CD8-positive, alpha-beta T cell (primary cell): ENCODE measurements at regions of chr12 and their contacts with region 1.

Region 1: GRCh38 chr12:46124848-46125619 is 134.7 kb upstream of the SCAF11 start:
- DNase-seq: peak; percentile 9 to 86 (median 53)
- ATAC-seq: peak; percentile 96
- H3K4me3 ChIP-seq: no peak overlapping the region
- H3K4me3 Mint-ChIP-seq: peak overlapping the region; percentile 7
- H3K27ac ChIP-seq: no peak overlapping the region
- H3K27ac Mint-ChIP-seq: peak overlapping the region; percentile 70
- H3K4me1 ChIP-seq: no peaks in the 10 kb centered on the region
- H3K4me1 Mint-ChIP-seq: peaks cover 4% of the 10 kb centered on the region
- H3K27me3 ChIP-seq: no peaks in the 10 kb centered on the region
- H3K27me3 Mint-ChIP-seq: peaks cover 7% of the 10 kb centered on the region
- CTCF ChIP-seq: peak; percentile 69

Region 2: DNA sequence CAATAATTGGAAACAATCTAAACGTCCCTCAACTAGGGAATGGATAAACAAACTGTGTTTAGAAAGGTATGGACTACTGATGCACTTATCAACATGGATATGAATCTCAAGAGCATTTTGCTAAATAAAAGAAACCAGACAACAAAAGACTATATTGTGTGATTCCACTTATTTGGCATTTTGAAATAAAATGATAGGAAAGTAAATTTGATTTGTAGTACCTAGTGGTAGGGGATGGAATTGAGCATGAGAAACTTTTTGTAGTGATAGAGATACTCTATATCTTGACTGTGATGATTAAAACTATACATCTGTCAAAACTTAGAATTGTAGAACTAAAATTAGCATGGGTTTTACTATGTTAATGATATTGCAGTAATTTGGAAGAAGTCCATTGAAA is 308.4 kb before region 1 on chr12:
- CTCF ChIA-PET with region 1: no interaction called
- POLR2A ChIA-PET with region 1: no interaction called
- intact Hi-C with region 1: no loop called
- DNase-seq: no peak
- ATAC-seq: no peak
- H3K4me3 ChIP-seq: no peak overlapping the region
- H3K4me3 Mint-ChIP-seq: no peak overlapping the region
- H3K27ac ChIP-seq: no peak overlapping the region
- H3K27ac Mint-ChIP-seq: no peak overlapping the region
- H3K4me1 ChIP-seq: no peaks in the 10 kb centered on the region
- H3K4me1 Mint-ChIP-seq: peaks cover 2% of the 10 kb centered on the region
- H3K27me3 ChIP-seq: no peaks in the 10 kb centered on the region
- H3K27me3 Mint-ChIP-seq: no peaks in the 10 kb centered on the region
- CTCF ChIP-seq: no peak

Region 3: DNA sequence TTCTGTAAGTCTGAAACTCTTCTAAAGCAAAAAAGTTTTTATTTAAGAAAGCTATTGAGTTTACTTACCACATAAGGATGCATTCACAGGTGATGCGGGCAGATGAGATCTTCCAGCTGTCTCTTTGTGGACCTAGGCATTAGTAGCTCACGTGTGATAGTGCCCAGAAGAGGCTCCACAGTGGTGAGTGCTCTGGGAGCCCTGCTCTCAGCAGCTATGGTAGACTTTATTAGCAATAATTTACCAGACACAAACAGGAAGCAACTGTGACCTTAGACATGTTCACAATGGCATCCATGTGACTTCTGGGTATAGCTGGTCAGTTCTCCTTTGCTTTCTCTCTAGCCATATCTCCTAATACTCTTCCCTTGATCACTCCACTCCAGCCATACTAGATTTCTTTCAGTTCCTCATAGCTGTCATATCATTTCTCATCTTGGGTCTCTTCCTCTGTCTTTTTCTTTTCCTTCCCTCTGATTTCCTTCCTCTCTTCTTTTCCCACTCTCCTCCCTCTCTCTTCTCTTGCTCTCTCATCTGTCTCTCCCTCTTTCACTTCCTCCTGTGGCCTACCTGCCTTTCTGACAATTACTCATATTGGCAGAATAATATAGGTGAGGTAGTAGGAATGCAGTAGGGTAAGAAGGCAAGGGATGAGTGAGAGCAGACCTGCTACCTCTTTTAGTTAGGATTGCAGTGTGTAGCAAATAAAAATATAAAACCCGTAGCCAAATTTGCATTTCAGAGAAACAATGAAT is 59.4 kb before region 1 on chr12:
- CTCF ChIA-PET with region 1: no interaction called
- POLR2A ChIA-PET with region 1: no interaction called
- intact Hi-C with region 1: no loop called
- DNase-seq: no peak
- ATAC-seq: no peak
- H3K4me3 ChIP-seq: no peak overlapping the region
- H3K4me3 Mint-ChIP-seq: no peak overlapping the region
- H3K27ac ChIP-seq: no peak overlapping the region
- H3K27ac Mint-ChIP-seq: no peak overlapping the region
- H3K4me1 ChIP-seq: no peaks in the 10 kb centered on the region
- H3K4me1 Mint-ChIP-seq: no peaks in the 10 kb centered on the region
- H3K27me3 ChIP-seq: no peaks in the 10 kb centered on the region
- H3K27me3 Mint-ChIP-seq: peaks cover 4% of the 10 kb centered on the region
- CTCF ChIP-seq: no peak

Region 4: GRCh38 chr12:46110928-46111699 is 13.9 kb before region 1 on chr12:
- CTCF ChIA-PET with region 1: interaction called, 10 read pairs
- POLR2A ChIA-PET with region 1: no interaction called
- intact Hi-C with region 1: no loop called
- DNase-seq: no peak
- ATAC-seq: no peak
- H3K4me3 ChIP-seq: no peak overlapping the region
- H3K4me3 Mint-ChIP-seq: no peak overlapping the region
- H3K27ac ChIP-seq: no peak overlapping the region
- H3K27ac Mint-ChIP-seq: no peak overlapping the region
- H3K4me1 ChIP-seq: no peaks in the 10 kb centered on the region
- H3K4me1 Mint-ChIP-seq: no peaks in the 10 kb centered on the region
- H3K27me3 ChIP-seq: no peaks in the 10 kb centered on the region
- H3K27me3 Mint-ChIP-seq: peaks cover 21% of the 10 kb centered on the region
- CTCF ChIP-seq: no peak

Region 5: DNA sequence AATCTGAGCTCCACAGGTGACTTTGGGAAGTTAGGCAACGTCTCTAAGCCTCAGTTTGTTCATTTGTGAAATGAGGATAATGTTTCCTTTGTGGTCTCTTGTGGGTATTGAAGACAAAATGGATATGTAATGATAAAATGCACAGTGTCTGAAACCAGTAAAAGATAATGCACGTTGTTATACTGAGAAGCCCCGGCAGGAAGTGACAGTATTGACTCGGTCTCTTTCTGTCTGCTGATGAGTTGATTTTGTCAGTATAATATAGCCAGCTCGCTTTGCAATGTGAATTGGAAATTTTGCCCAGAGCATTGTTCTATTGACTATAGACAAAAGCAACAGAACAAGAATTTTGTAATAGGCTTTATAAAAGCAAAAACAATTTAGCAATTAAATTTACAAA is 193.0 kb after region 1 on chr12:
- CTCF ChIA-PET with region 1: interaction called, 10 read pairs
- POLR2A ChIA-PET with region 1: no interaction called
- intact Hi-C with region 1: no loop called
- DNase-seq: no peak
- ATAC-seq: no peak
- H3K4me3 ChIP-seq: no peak overlapping the region
- H3K4me3 Mint-ChIP-seq: no peak overlapping the region
- H3K27ac ChIP-seq: no peak overlapping the region
- H3K27ac Mint-ChIP-seq: no peak overlapping the region
- H3K4me1 ChIP-seq: no peaks in the 10 kb centered on the region
- H3K4me1 Mint-ChIP-seq: no peaks in the 10 kb centered on the region
- H3K27me3 ChIP-seq: peaks cover 0 to 2% of the 10 kb centered on the region in 2 experiments
- H3K27me3 Mint-ChIP-seq: peaks cover 4% of the 10 kb centered on the region
- CTCF ChIP-seq: no peak

Region 6: GRCh38 chr12:46675736-46676135 is 550.7 kb after region 1 on chr12:
- CTCF ChIA-PET with region 1: interaction called, 6 read pairs
- POLR2A ChIA-PET with region 1: no interaction called
- intact Hi-C with region 1: loop called in 1 of 2 experiments (anchors 5 kb)
- DNase-seq: peak in 2 of 9 experiments; percentile 31 to 40
- ATAC-seq: no peak
- H3K4me3 ChIP-seq: no peak overlapping the region
- H3K4me3 Mint-ChIP-seq: no peak overlapping the region
- H3K27ac ChIP-seq: no peak overlapping the region
- H3K27ac Mint-ChIP-seq: no peak overlapping the region
- H3K4me1 ChIP-seq: no peaks in the 10 kb centered on the region
- H3K4me1 Mint-ChIP-seq: no peaks in the 10 kb centered on the region
- H3K27me3 ChIP-seq: no peaks in the 10 kb centered on the region
- H3K27me3 Mint-ChIP-seq: no peaks in the 10 kb centered on the region
- CTCF ChIP-seq: peak; percentile 72

Region 7: GRCh38 chr12:46983393-46984266 is 858.6 kb after region 1 on chr12:
- CTCF ChIA-PET with region 1: interaction called, 5 read pairs
- POLR2A ChIA-PET with region 1: no interaction called
- intact Hi-C with region 1: loop called (anchors 1 to 5 kb)
- DNase-seq: peak in 7 of 9 experiments; percentile 9 to 59 (median 30)
- ATAC-seq: peak; percentile 69
- H3K4me3 ChIP-seq: no peak overlapping the region
- H3K4me3 Mint-ChIP-seq: no peak overlapping the region
- H3K27ac ChIP-seq: no peak overlapping the region
- H3K27ac Mint-ChIP-seq: no peak overlapping the region
- H3K4me1 ChIP-seq: peaks cover 6% of the 10 kb centered on the region
- H3K4me1 Mint-ChIP-seq: peaks cover 8% of the 10 kb centered on the region
- H3K27me3 ChIP-seq: no peaks in the 10 kb centered on the region
- H3K27me3 Mint-ChIP-seq: peaks cover 20% of the 10 kb centered on the region
- CTCF ChIP-seq: peak; percentile 63